Cardiac septum (tissue), 1 donor: ENCODE measurements at regions of chr1 and their contacts with region 1.

Region 1: GRCh38 chr1:156193488-156194299 is at the start of gene SLC25A44:
- DNase-seq: peak; percentile 98
- total RNA-seq, gene SLC25A44: 15.4 TPM

Region 2: DNA sequence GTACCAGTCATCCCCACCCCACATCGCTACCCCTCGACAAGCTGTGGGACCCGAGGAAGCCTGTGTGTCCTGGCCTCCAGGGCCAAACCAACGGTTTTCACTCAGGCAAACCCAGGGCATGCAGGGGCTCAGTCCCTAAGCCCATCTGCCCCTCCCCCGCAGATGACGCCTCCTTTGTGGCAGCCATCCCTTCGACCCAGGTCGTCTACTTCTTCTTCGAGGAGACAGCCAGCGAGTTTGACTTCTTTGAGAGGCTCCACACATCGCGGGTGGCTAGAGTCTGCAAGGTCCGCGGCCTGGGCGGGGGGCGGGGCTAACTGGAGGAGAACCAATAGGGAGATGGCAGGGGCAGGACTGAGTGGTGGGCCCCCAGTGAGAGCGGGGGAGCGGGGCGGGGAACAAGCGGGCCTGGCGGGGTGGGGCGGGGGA is 32.9 kb before region 1 on chr1:
- intact Hi-C with region 1: loop called (anchors 2 kb)
- DNase-seq: peak; percentile 90

Region 3: GRCh38 chr1:156212833-156213643 is 19.3 kb after region 1 on chr1 and contains the start of gene PMF1:
- intact Hi-C with region 1: loop called (anchors 1 kb)
- DNase-seq: peak; percentile 98
- total RNA-seq, gene PMF1: 54.3 TPM

Region 4: GRCh38 chr1:156226116-156226538 is 32.4 kb after region 1 on chr1:
- intact Hi-C with region 1: no loop called
- DNase-seq: no peak